Cardiac septum (tissue), 1 donor: ENCODE measurements at regions of chr6 and their contacts with region 1.

Region 1: DNA sequence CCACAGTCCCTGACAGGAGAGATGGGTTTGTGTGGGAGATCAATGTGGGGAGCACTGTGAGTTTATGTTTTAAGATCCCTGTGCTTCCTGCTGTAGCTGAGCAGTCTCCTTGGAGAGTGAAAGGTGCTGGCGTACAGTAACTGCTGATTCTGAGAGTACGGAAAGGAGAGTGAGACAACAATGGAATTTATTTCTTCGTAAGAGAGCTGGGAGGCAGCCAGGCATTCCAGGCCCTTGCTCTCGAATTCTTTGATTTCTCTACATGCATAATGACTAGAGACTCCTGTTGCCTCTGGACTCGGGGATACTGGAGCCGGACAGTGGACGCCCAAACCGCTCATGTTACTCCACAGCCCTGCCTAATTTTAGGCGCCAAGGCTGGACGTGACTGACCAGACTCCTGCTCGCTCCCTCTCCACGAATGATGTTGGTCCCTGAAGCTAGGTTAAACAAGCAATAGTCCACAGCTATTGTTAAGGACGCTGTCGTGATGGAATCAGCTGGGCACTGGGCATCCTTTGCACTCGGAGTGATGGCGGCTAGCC is 131.0 kb upstream of the PHACTR1 start:
- DNase-seq: no peak

Region 2: DNA sequence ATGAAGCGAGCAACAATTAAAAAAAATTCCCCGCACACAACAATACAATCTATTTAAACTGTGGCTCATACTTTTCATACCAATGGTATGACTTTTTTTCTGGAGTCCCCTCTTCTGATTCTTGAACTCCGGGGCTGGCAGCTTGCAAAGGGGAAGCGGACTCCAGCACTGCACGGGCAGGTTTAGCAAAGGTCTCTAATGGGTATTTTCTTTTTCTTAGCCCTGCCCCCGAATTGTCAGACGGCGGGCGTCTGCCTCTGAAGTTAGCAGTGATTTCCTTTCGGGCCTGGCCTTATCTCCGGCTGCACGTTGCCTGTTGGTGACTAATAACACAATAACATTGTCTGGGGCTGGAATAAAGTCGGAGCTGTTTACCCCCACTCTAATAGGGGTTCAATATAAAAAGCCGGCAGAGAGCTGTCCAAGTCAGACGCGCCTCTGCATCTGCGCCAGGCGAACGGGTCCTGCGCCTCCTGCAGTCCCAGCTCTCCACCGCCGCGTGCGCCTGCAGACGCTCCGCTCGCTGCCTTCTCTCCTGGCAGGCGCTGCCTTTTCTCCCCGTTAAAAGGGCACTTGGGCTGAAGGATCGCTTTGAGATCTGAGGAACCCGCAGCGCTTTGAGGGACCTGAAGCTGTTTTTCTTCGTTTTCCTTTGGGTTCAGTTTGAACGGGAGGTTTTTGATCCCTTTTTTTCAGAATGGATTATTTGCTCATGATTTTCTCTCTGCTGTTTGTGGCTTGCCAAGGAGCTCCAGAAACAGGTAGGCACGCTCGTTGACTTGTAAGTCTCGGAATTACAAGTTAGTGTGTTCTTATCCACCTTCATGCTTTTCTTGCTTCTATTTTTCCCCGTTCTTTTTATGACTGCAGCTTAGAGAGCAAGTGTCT is 295.4 kb before region 1 on chr6 and contains the start of gene EDN1:
- intact Hi-C with region 1: loop called (anchors 5 kb)
- DNase-seq: peak; percentile 90
- total RNA-seq, gene EDN1: 5.9 TPM

Region 3: GRCh38 chr6:12436683-12437082 is 148.9 kb before region 1 on chr6:
- intact Hi-C with region 1: no loop called
- DNase-seq: no peak

Region 4: DNA sequence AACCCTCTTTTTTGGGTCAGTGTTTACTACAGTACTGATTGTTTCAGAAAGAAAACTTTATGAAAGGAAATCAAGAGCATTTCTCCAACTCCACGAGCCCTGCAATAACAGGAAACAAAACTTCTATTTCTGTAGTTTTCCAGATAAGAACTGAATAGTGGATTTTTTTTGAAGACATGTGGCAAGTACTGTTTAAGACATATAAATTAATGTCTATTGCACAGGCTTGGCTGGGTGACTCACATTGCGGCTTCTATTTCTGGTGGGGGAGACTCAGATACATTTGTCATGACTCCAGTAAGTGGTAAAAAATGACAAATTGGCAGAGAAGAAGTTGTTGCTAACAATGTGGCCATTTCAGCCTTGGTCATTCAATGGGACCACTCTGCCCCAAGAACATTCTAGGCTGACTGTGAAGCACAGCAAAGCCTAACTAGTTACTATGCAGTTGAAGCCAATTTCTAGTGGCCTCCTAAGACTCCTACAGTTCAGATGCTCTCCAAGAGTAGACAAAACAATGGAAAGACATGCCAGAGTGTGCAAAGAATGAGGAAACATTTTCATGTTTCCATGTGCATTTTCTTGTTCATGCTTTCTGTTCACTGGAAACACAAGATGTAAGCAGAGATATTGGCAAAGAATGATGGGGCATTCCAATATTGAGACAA is 94.5 kb before region 1 on chr6:
- intact Hi-C with region 1: loop called (anchors 10 kb)
- DNase-seq: no peak

Region 5: GRCh38 chr6:12653486-12653885 is 67.9 kb after region 1 on chr6:
- intact Hi-C with region 1: no loop called
- DNase-seq: no peak